GM12878 (cell line): ENCODE measurements at regions of chr13 and their contacts with region 1.

Region 1: GRCh38 chr13:29923554-29924481 is 73.4 kb upstream of the UBL3 start:
- DNase-seq: no peak
- ATAC-seq: peak; percentile 89
- H3K4me3 ChIP-seq: no peak overlapping the region
- H3K27ac ChIP-seq: no peak overlapping the region
- H3K4me1 ChIP-seq: peaks cover 5% of the 10 kb centered on the region; the same call in 1 of the 2 replicates
- H3K27me3 ChIP-seq: no peaks in the 10 kb centered on the region
- CTCF ChIP-seq: peak; percentile 49 to 89 (median 89)
- EP300 ChIP-seq: no peak
- POLR2A ChIP-seq: no peak
- RAD21 ChIP-seq: peak; percentile 58

Region 2: DNA sequence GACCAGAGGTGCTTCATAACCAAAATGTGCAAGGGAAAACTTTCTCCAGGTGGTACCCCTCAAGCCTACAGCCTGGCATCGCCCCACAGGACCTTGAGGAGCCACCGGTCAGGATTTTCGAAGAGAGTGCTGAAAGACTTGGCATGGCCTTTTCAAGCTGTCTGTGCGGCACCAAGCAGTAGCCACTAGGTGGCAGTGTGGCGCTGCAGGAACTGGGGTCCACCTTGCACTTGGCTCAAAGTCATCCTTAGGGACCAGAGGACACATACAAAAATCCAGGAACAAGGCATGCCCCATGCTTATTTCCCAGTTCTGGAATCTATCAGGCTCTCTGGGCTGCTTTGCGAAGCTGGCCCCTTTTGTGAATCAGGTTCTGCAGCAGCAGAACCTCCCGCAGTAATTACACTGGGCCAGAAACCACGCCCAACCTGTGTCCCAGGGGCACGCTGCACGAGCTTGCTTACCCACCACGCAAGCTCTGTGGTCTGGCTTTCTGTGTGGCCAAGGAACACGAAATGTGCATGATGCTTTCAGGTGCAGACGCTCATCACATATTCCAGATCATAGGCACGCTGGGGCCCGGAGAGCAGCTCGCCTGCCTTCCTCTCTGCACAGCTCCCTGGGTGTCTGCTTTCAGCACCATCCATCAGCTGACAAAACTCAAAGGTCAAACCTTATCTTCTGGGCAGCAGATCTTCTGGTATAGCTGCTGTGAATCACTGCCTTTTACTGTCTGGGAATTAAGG is 415.5 kb before region 1 on chr13:
- CTCF ChIA-PET with region 1: interaction called, 12 read pairs
- POLR2A ChIA-PET with region 1: no interaction called
- RAD21 ChIA-PET with region 1: no interaction called
- SMC1A ChIA-PET with region 1: no interaction called
- in situ Hi-C with region 1: no loop called
- intact Hi-C with region 1: no loop called
- DNase-seq: no peak
- ATAC-seq: peak; percentile 94
- H3K4me3 ChIP-seq: no peak overlapping the region
- H3K27ac ChIP-seq: no peak overlapping the region
- H3K4me1 ChIP-seq: no peaks in the 10 kb centered on the region
- H3K27me3 ChIP-seq: no peaks in the 10 kb centered on the region
- CTCF ChIP-seq: peak; percentile 86 to 98 (median 98)
- EP300 ChIP-seq: no peak
- POLR2A ChIP-seq: peak; percentile 67
- RAD21 ChIP-seq: peak; percentile 91

Region 3: GRCh38 chr13:29782798-29783197 is 141.0 kb before region 1 on chr13:
- CTCF ChIA-PET with region 1: interaction called, 15 read pairs
- POLR2A ChIA-PET with region 1: no interaction called
- RAD21 ChIA-PET with region 1: no interaction called
- SMC1A ChIA-PET with region 1: no interaction called
- in situ Hi-C with region 1: no loop called
- intact Hi-C with region 1: no loop called
- DNase-seq: no peak
- ATAC-seq: peak; percentile 88
- H3K4me3 ChIP-seq: no peak overlapping the region
- H3K27ac ChIP-seq: peak overlapping the region; percentile 33; the same call in 1 of the 2 replicates
- H3K4me1 ChIP-seq: no peaks in the 10 kb centered on the region
- H3K27me3 ChIP-seq: no peaks in the 10 kb centered on the region
- CTCF ChIP-seq: no peak
- EP300 ChIP-seq: no peak
- POLR2A ChIP-seq: no peak
- RAD21 ChIP-seq: no peak

Region 4: DNA sequence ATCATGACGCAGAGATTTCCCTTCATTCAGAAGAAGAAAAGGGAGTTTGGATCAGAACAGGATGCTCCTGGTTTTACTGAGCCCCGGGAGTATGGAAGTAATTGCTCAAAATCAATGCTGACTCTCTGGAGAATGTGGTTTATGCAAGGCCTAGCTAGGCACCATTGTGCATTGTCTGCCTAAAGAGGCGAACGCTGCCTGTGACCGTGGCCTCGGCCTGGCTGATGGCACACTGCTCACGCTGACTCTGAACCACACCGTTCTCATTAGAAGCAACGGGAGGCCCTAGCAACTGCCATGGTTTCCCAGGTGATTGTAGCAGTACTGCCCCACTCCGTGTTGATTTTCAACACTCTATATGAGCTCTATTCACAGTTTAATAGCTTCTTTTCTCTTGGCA is 31.7 kb before region 1 on chr13:
- CTCF ChIA-PET with region 1: interaction called, 10 read pairs
- POLR2A ChIA-PET with region 1: no interaction called
- RAD21 ChIA-PET with region 1: no interaction called
- SMC1A ChIA-PET with region 1: interaction called, 3 read pairs
- in situ Hi-C with region 1: no loop called
- intact Hi-C with region 1: no loop called
- DNase-seq: no peak
- ATAC-seq: no peak
- H3K4me3 ChIP-seq: no peak overlapping the region
- H3K27ac ChIP-seq: no peak overlapping the region
- H3K4me1 ChIP-seq: no peaks in the 10 kb centered on the region
- H3K27me3 ChIP-seq: no peaks in the 10 kb centered on the region
- CTCF ChIP-seq: no peak
- EP300 ChIP-seq: no peak
- POLR2A ChIP-seq: no peak
- RAD21 ChIP-seq: no peak

Region 5: DNA sequence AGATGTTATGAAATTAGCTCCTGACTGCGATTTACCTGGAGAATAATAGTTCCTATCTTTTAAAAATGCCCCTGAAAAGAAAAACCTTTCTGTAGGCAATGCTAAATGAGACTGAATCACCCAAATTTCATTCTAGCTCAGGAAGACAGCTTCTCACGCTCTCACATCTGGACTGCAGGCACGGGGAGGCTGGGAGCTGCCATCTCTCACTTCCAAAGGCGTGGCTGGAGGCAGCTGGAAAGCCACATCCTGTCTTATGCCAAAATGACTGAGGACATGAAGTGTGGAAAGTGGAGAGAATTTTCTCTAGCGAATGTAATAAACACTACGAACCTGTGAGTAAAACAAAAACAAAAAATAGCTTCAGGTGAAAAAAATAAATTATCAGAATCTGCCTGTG is 15.4 kb before region 1 on chr13:
- CTCF ChIA-PET with region 1: interaction called, 16 read pairs
- POLR2A ChIA-PET with region 1: interaction called, 5 read pairs
- RAD21 ChIA-PET with region 1: interaction called, 3 read pairs
- SMC1A ChIA-PET with region 1: interaction called, 3 read pairs
- in situ Hi-C with region 1: no loop called
- intact Hi-C with region 1: no loop called
- DNase-seq: no peak
- ATAC-seq: no peak
- H3K4me3 ChIP-seq: no peak overlapping the region
- H3K27ac ChIP-seq: no peak overlapping the region
- H3K4me1 ChIP-seq: peaks cover 11% of the 10 kb centered on the region; the same call in 1 of the 2 replicates
- H3K27me3 ChIP-seq: no peaks in the 10 kb centered on the region; a peak in 1 of 4 replicates
- CTCF ChIP-seq: no peak
- EP300 ChIP-seq: no peak
- POLR2A ChIP-seq: no peak
- RAD21 ChIP-seq: no peak

Region 6: GRCh38 chr13:29935309-29935981 is 11.6 kb after region 1 on chr13:
- CTCF ChIA-PET with region 1: interaction called, 94 read pairs
- POLR2A ChIA-PET with region 1: no interaction called
- RAD21 ChIA-PET with region 1: interaction called, 12 read pairs
- SMC1A ChIA-PET with region 1: interaction called, 5 read pairs
- in situ Hi-C with region 1: no loop called
- intact Hi-C with region 1: no loop called
- DNase-seq: peak; percentile 74
- ATAC-seq: peak; percentile 91
- H3K4me3 ChIP-seq: peak overlapping the region; percentile 50; the same call in 1 of the 2 replicates
- H3K27ac ChIP-seq: no peak overlapping the region
- H3K4me1 ChIP-seq: peaks cover 20% of the 10 kb centered on the region
- H3K27me3 ChIP-seq: no peaks in the 10 kb centered on the region
- CTCF ChIP-seq: no peak
- EP300 ChIP-seq: peak; percentile 74 to 75; a peak in 3 of 4 replicates
- POLR2A ChIP-seq: no peak
- RAD21 ChIP-seq: no peak

Region 7: GRCh38 chr13:29943273-29943672 is 19.5 kb after region 1 on chr13:
- CTCF ChIA-PET with region 1: interaction called, 94 read pairs
- POLR2A ChIA-PET with region 1: no interaction called
- RAD21 ChIA-PET with region 1: no interaction called
- SMC1A ChIA-PET with region 1: interaction called, 3 read pairs
- in situ Hi-C with region 1: no loop called
- intact Hi-C with region 1: no loop called
- DNase-seq: no peak
- ATAC-seq: no peak
- H3K4me3 ChIP-seq: no peak overlapping the region
- H3K27ac ChIP-seq: no peak overlapping the region
- H3K4me1 ChIP-seq: no peaks in the 10 kb centered on the region
- H3K27me3 ChIP-seq: no peaks in the 10 kb centered on the region
- CTCF ChIP-seq: no peak
- EP300 ChIP-seq: no peak
- POLR2A ChIP-seq: no peak
- RAD21 ChIP-seq: no peak

Region 8: DNA sequence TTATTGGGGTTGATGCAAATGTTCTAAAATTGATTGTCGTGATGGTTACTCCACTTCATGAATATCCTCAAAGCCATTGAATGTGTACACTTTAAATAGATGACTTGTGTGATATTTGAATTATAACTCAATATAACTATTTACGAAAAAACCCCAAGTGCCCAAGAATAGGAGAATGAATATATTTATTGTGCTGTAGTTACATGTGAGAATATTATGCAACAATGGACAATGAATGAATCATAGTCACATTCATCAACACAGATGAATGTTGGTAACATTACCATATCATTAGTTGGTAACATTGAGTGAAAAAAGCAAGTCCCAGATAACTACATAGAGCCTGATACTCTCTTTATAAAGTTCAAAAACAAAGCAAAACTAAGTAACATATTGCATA is 54.4 kb after region 1 on chr13:
- CTCF ChIA-PET with region 1: no interaction called
- POLR2A ChIA-PET with region 1: no interaction called
- RAD21 ChIA-PET with region 1: no interaction called
- SMC1A ChIA-PET with region 1: no interaction called
- in situ Hi-C with region 1: no loop called
- intact Hi-C with region 1: no loop called
- DNase-seq: no peak
- ATAC-seq: no peak
- H3K4me3 ChIP-seq: no peak overlapping the region
- H3K27ac ChIP-seq: no peak overlapping the region
- H3K4me1 ChIP-seq: no peaks in the 10 kb centered on the region
- H3K27me3 ChIP-seq: no peaks in the 10 kb centered on the region; a peak in 1 of 4 replicates
- CTCF ChIP-seq: no peak
- EP300 ChIP-seq: no peak
- POLR2A ChIP-seq: no peak
- RAD21 ChIP-seq: no peak

Region 9: DNA sequence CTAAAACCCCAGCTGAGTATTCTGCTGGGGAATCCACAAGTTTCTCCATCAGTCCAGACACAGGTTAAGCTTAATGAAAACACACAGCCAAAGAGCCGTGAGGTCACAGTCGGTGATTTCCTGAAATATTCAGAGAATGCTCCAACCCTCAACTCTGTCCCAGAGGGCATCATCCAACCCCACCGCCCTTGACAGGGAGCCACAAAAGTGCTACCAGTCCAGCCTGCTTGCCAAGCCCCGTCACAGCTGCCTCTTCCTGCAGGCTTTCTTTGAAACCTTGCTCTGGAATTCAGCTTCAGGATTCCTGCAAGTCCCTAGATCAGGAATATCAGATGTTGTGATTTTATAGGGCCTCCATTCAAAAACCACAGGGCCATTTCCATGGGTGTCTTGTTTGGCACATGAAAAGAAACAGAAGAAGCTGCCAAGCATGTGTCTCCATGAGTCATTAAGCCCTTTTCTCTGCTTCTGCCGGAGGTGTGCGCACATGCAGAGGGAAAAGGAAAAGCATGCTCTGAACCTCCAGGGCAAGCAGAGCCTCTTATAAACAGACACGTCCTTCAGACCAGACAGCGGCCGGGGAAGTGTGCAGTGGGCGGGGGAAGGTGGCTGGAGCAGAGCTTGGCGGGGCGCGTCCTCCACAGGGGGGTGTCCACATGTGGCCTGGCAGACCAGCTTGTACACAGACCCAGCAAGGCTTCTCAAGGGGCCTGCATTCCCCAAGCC is 218.8 kb after region 1 on chr13:
- CTCF ChIA-PET with region 1: no interaction called
- POLR2A ChIA-PET with region 1: no interaction called
- RAD21 ChIA-PET with region 1: no interaction called
- SMC1A ChIA-PET with region 1: no interaction called
- in situ Hi-C with region 1: no loop called
- intact Hi-C with region 1: no loop called
- DNase-seq: no peak
- ATAC-seq: peak; percentile 46
- H3K4me3 ChIP-seq: no peak overlapping the region
- H3K27ac ChIP-seq: peak overlapping the region; percentile 0; the same call in 1 of the 2 replicates
- H3K4me1 ChIP-seq: peaks cover 60% of the 10 kb centered on the region
- H3K27me3 ChIP-seq: no peaks in the 10 kb centered on the region
- CTCF ChIP-seq: no peak
- EP300 ChIP-seq: no peak
- POLR2A ChIP-seq: no peak
- RAD21 ChIP-seq: no peak